ENCODE measurements at regions of chr7 and their contacts with region 1.

Region 1: DNA sequence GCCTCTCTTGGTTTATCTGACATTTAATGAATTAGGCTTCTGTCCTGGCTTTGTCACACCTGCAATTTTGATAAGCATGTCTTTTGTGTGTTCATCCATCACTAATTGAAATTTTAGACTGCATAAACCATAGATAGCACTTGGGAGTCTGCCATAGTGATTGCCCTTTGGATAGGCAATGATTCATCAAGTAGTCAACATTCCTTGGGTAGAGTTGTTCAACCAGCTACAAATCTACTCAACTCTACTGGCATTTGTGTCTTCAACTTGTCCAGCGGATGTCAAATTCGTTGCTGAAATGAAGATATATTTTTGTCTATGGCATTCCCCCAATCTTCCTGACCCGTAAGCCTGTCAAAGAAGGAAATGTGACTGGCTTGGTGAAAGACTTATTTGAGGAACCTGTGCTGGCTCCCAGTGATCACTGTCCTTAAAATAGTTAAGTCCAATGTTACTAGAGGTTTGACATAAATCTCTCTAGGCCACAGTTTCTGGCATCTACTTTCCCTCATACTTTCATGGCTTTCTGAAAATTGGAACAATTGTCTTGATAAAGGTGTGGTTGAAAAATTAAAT is 33.7 kb upstream of the CREB5 start:
- H3K4me3 ChIP-seq: no peak overlapping the region
- H3K27ac ChIP-seq: no peak overlapping the region
- H3K4me1 ChIP-seq: no peaks in the 10 kb centered on the region
- CTCF ChIP-seq: no peak

Region 2: DNA sequence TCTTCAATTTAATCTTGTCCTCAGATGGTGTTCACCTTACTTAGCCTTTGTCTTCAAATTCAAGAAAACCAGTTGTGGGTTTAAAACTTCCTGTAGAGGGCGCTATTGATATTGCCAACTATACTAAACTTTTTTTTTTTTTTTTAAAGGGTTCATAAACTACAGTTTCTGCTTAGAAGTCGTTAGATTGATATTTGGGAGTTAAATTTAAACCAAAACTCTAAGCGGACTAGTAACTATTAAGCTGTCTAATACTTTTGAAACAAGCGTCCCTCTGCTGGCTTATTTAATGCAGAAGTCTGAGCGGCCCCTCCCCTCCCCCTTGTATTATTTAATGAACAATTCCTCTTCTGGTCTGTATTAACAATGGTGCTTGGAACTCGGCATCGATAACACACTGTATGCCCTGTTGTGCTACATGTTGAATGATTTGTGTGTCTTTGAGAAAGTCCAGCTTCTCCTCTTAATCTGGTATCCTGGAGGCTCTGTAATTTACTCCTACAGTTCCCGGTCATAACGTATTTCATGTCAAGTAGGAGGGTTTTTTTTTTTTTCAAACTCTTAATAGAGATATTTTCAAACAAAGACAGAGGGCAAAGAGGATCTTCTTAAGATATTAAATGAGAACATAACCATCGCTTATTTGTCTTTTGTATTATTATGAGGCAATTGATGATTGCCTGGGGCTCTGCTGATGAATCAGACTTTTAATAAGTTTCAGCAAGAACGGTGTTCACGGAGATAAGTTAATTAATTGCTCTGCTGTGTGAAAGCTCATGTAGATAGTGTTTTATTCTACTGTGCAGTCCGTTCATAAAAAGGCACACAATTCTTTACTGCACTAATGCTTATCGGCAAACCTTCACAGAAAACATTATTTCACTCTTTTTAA is 11.1 kb after region 1 on chr7:
- CTCF ChIA-PET with region 1: interaction called, 16 read pairs
- POLR2A ChIA-PET with region 1: no interaction called
- H3K4me3 ChIP-seq: peak overlapping the region; percentile 41
- H3K27ac ChIP-seq: peak overlapping the region; percentile 41
- H3K4me1 ChIP-seq: no peaks in the 10 kb centered on the region
- CTCF ChIP-seq: peak; percentile 29; the same call in 1 of the 2 replicates

Measured in HEK293 (cell line).